Activated CD4-positive, alpha-beta T cell treated with anti-CD3 and anti-CD28 coated beads for 36 hours (primary cell): ENCODE measurements at regions of chr6 and their contacts with region 1.

Region 1: DNA sequence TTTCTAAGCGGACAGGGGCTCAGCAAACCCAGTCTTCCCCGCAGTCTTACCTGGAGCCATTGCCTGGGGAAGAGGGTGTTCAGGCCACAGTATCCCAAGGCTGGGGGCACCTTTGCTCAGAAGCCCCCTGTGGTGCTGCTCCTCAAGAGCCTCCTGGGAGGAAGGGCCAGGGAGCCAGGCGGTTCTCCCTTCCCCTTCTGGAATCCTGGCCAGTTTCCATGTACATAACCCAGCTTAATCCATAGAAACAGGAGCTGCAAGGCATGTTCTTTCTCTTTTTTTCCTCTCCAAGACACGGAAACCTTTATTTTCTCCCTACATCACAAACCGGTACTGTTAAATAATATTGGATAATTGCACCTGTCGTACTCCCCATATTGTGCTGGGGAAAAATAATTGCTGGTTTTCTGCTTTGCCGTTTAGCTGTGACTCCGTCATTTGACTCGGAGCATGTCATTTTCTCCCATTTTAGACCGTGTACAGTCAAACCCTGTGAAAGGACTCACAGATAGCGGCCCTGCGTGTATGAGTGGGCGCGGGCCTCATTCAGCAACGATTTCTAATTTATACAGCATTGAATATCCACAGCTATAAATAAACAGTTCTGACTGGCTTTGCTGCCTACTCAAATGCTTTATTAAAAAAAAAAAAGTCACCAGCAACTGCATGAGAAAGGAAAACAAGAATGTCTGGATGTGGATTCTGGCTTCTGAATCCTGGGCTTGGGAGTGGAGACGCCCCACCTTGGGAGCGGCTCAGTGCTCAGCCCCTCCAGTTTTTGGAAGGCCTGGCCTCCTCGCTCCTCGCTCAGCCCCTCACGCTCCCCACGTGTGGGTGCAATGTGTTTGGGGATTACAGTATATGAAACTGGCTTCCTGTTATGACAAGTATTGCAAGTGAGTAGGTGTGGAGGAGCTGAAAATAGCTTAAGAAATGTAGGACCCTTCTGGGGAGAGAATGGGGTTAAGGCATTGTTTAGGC is 67.3 kb downstream of the ADTRP start:
- DNase-seq: peak; percentile 86
- ATAC-seq: peak; percentile 57
- H3K4me3 Mint-ChIP-seq: peak overlapping the region; percentile 75
- H3K27ac Mint-ChIP-seq: peak overlapping the region; percentile 100
- H3K4me1 Mint-ChIP-seq: peaks cover 80% of the 10 kb centered on the region
- H3K27me3 Mint-ChIP-seq: no peaks in the 10 kb centered on the region

Region 2: GRCh38 chr6:11722805-11723631 is 11.7 kb after region 1 on chr6:
- CTCF ChIA-PET with region 1: interaction called, 35 read pairs
- POLR2A ChIA-PET with region 1: interaction called, 38 read pairs
- intact Hi-C with region 1: loop called (anchors 1 to 2 kb)
- DNase-seq: no peak
- ATAC-seq: peak; percentile 42
- H3K4me3 Mint-ChIP-seq: peak overlapping the region; percentile 59
- H3K27ac Mint-ChIP-seq: peak overlapping the region; percentile 86
- H3K4me1 Mint-ChIP-seq: peaks cover 56% of the 10 kb centered on the region
- H3K27me3 Mint-ChIP-seq: no peaks in the 10 kb centered on the region

Region 3: GRCh38 chr6:11766589-11767450 is 55.5 kb after region 1 on chr6:
- CTCF ChIA-PET with region 1: no interaction called
- POLR2A ChIA-PET with region 1: interaction called, 13 read pairs
- intact Hi-C with region 1: loop called (anchors 1 to 5 kb)
- DNase-seq: no peak
- ATAC-seq: no peak
- H3K4me3 Mint-ChIP-seq: no peak overlapping the region
- H3K27ac Mint-ChIP-seq: no peak overlapping the region
- H3K4me1 Mint-ChIP-seq: peaks cover 39% of the 10 kb centered on the region
- H3K27me3 Mint-ChIP-seq: no peaks in the 10 kb centered on the region

Region 4: GRCh38 chr6:11785774-11786579 is 74.7 kb after region 1 on chr6:
- CTCF ChIA-PET with region 1: no interaction called
- POLR2A ChIA-PET with region 1: interaction called, 7 read pairs
- intact Hi-C with region 1: loop called (anchors 5 kb)
- DNase-seq: peak; percentile 68
- ATAC-seq: peak; percentile 89
- H3K4me3 Mint-ChIP-seq: peak overlapping the region; percentile 55
- H3K27ac Mint-ChIP-seq: peak overlapping the region; percentile 52
- H3K4me1 Mint-ChIP-seq: peaks cover 11% of the 10 kb centered on the region
- H3K27me3 Mint-ChIP-seq: no peaks in the 10 kb centered on the region

Region 5: DNA sequence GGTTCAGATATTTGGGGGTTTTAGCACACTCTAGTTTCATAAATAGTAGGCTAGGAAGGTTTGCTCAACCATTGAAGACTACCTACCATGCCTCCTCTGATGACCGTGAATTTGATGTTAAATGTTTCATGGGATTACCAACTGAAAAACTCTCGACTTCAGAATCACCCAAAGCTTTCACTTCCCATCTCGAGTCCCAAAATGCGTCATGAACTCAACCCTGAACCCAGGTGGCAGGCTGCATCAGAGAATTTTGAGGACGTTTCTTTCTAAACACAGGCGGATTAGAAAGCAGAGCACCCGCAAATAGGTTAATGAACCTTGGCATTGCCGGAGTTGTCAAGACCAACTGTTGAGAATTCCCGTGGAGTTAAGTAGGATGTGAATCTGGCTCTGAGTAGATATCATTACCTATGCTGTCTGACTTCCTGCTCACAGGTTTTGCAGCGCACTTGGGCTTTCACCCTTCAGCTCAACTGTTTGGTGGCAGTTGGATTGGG is 165.7 kb after region 1 on chr6:
- CTCF ChIA-PET with region 1: no interaction called
- POLR2A ChIA-PET with region 1: no interaction called
- intact Hi-C with region 1: no loop called
- DNase-seq: no peak
- ATAC-seq: no peak
- H3K4me3 Mint-ChIP-seq: no peak overlapping the region
- H3K27ac Mint-ChIP-seq: no peak overlapping the region
- H3K4me1 Mint-ChIP-seq: no peaks in the 10 kb centered on the region
- H3K27me3 Mint-ChIP-seq: no peaks in the 10 kb centered on the region

Region 6: DNA sequence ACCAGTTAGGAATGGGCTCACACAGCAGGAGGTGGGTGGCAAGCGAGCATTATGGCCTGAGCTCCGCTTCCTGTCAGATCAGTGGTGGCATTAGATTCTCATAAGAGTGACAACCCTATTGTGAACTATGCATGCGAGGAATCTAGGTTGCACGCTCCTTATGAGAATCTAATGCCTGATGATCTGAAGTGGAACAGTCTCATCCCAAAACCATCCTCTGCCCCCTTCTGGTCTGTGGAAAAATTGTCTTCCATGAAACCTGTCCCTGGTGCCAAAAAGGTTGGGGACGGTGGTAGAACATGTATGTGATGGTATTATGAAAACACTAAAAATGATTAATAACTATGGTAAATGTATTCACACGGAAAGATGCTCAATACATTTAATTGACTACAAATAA is 201.1 kb after region 1 on chr6:
- CTCF ChIA-PET with region 1: no interaction called
- POLR2A ChIA-PET with region 1: no interaction called
- intact Hi-C with region 1: loop called in 1 of 2 experiments (anchors 5 kb)
- DNase-seq: no peak
- ATAC-seq: no peak
- H3K4me3 Mint-ChIP-seq: no peak overlapping the region
- H3K27ac Mint-ChIP-seq: no peak overlapping the region
- H3K4me1 Mint-ChIP-seq: peaks cover 11% of the 10 kb centered on the region
- H3K27me3 Mint-ChIP-seq: no peaks in the 10 kb centered on the region

Region 7: DNA sequence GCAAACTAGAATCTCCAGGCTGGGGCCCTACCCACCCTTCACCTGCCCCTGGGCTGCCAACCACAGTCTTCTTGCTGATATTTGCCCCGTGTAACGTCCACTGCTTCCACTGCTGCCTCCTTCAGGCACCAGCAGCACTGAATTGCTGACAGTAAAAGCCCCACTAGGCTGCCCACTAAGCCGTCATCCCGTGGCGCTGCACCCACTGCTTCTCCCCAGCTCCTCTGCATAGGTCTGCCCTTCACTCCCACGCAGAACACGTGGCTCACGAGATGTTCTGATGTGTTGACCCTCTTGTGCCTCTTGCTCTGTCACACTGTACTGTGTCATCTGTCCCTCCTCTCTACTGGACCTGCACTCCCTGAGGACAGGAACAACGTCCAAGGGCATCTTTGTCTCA is 214.5 kb after region 1 on chr6:
- CTCF ChIA-PET with region 1: no interaction called
- POLR2A ChIA-PET with region 1: no interaction called
- intact Hi-C with region 1: no loop called
- DNase-seq: no peak
- ATAC-seq: no peak
- H3K4me3 Mint-ChIP-seq: no peak overlapping the region
- H3K27ac Mint-ChIP-seq: no peak overlapping the region
- H3K4me1 Mint-ChIP-seq: no peaks in the 10 kb centered on the region
- H3K27me3 Mint-ChIP-seq: peaks cover 3% of the 10 kb centered on the region

Region 8: GRCh38 chr6:12051861-12052368 is 340.6 kb after region 1 on chr6:
- CTCF ChIA-PET with region 1: interaction called, 3 read pairs
- POLR2A ChIA-PET with region 1: no interaction called
- intact Hi-C with region 1: loop called (anchors 1 to 2 kb)
- DNase-seq: peak; percentile 80
- ATAC-seq: peak; percentile 91
- H3K4me3 Mint-ChIP-seq: peak overlapping the region; percentile 53
- H3K27ac Mint-ChIP-seq: peak overlapping the region; percentile 94
- H3K4me1 Mint-ChIP-seq: peaks cover 76% of the 10 kb centered on the region
- H3K27me3 Mint-ChIP-seq: no peaks in the 10 kb centered on the region

Region 9: DNA sequence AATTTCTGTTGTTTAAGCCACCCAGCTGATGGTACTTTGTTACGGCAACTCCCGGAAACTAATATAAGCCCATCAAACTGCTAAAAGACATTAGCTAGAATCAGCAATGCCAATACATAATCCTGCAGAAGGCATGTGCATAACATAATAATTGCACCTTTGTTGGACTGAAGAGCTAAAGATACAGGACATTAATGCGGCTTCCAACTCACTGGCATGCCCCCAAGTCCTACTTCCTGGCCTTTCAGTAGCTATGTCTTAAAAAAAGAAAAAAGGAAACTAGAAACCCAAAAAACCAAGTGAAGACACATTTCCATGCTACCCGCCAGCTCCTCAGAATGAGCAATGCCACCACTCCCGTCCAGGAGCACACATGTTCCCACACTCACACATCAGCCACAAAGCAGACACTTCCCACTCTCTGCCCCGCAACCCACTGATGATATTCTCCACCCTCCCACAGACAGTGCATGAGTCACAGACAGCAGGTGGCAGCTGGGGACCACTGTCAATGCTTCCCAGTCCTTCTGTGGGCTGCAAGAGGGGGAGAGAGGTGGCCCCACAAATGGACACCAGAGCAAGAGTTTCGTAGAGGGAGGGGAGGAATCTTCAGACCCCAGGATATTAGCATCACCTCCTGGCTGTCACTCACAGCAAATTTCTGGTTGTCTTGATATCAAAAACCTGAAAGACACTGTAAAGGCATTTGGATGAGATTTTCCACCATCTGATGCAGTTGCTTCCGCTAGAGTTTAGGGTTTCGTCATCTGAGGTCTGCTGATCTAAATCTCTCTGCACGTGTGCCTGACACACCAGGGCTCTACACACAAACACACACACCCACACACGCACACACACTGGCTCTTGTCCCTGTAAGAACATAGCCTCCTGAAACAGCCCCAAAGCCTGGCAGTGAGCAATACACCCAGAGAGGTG is 1743.3 kb after region 1 on chr6:
- CTCF ChIA-PET with region 1: no interaction called
- POLR2A ChIA-PET with region 1: no interaction called
- intact Hi-C with region 1: loop called in 1 of 2 experiments (anchors 10 kb)
- DNase-seq: peak; percentile 88
- ATAC-seq: peak; percentile 66
- H3K4me3 Mint-ChIP-seq: peak overlapping the region; percentile 36
- H3K27ac Mint-ChIP-seq: peak overlapping the region; percentile 95
- H3K4me1 Mint-ChIP-seq: peaks cover 63% of the 10 kb centered on the region
- H3K27me3 Mint-ChIP-seq: no peaks in the 10 kb centered on the region